ENCODE measurements at regions of chr5 and their contacts with region 1.

Region 1: GRCh38 chr5:34522599-34523386 is 133.3 kb upstream of the RAI14 start:
- DNase-seq: peak; percentile 48
- ATAC-seq: peak; percentile 83

Region 2: DNA sequence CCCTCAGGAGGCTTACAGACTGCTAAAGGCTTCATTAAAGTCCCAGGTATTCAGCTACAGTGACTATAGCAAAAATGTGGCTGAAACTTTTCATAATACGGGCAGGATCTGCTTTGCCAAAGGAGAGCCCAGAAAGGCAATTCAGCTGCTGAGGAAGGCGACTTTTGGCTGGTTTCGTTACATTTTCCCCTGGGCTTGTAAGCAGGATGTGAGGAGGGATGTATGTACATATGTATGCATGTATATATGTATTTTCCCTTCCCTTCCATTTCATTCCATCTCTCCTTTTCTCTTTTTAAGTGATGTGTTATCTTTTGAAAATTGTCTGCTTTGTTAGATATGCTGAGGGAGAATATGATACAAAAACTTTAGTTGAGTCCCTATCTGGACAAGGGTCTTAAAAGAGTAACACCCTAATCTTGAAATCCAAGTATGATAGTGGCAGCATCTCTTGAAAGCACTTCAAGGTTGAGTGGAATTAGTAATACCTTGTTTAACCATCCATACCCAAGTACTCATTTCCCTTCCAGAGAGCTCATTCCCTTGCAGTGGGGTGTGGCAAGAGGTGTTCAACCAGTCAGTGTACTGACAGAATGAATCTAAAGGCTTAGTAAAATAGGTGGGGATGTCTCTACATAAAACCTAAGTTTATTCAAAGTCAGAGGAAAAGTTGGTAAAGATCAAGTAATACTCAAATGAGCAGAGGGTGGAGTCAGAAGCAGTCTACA is 363.8 kb after region 1 on chr5:
- intact Hi-C with region 1: no loop called
- DNase-seq: no peak
- ATAC-seq: no peak

Region 3: GRCh38 chr5:34898258-34898895 is 375.6 kb after region 1 on chr5:
- intact Hi-C with region 1: loop called (anchors 1 kb)
- DNase-seq: peak; percentile 50
- ATAC-seq: peak; percentile 88